ENCODE measurements at regions of chr2 and their contacts with region 1.

Region 1: GRCh38 chr2:180125245-180125962 is 118.3 kb upstream of the CWC22 start:
- DNase-seq: peak; percentile 94
- H3K4me3 ChIP-seq: no peak overlapping the region
- H3K27ac ChIP-seq: no peak overlapping the region
- H3K4me1 ChIP-seq: peaks cover 29% of the 10 kb centered on the region
- H3K27me3 ChIP-seq: no peaks in the 10 kb centered on the region
- CTCF ChIP-seq: peak; percentile 70 to 77

Region 2: DNA sequence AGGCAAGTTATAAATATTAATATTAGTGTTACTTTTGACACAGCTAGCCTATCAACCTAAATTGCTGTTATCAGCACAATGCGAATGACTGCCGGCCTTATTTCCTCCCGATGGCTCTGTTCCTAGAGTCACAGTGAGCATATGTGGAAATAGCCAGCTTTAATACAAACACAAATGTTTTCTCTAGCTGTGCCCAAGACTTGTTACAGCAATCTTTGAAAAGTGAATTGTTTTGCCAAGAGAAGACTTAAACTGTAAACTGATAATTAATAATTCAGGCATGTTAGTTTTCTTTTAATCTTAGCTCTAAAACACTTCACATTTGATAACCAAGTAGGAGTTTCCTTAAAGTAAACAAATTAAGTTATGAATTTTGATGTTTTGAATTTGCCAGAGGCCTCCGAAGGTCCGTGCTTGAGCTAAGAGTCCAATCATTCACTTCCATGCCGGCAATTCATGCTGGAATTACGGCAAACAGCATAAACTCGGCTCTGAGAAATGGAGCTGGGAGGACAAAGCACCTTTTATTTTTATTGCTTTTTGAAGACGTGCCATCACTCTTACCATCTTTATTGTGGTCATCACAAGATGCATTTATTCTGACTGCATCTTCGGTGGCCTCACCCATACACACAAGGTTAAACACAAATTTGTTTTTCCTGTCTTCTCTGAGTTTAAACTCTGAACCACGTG is 66.2 kb after region 1 on chr2:
- CTCF ChIA-PET with region 1: no interaction called
- dilution Hi-C with region 1: no loop called
- in situ Hi-C with region 1: no loop called
- intact Hi-C with region 1: no loop called
- DNase-seq: no peak
- H3K4me3 ChIP-seq: no peak overlapping the region
- H3K27ac ChIP-seq: no peak overlapping the region
- H3K4me1 ChIP-seq: no peaks in the 10 kb centered on the region
- H3K27me3 ChIP-seq: no peaks in the 10 kb centered on the region
- CTCF ChIP-seq: no peak

Region 3: GRCh38 chr2:180222644-180223043 is 97.2 kb after region 1 on chr2:
- CTCF ChIA-PET with region 1: no interaction called
- dilution Hi-C with region 1: no loop called
- in situ Hi-C with region 1: no loop called
- intact Hi-C with region 1: loop called (anchors 5 kb)
- DNase-seq: peak; percentile 95
- H3K4me3 ChIP-seq: peak overlapping the region in 1 of 3 experiments; percentile 2
- H3K27ac ChIP-seq: no peak overlapping the region
- H3K4me1 ChIP-seq: peaks cover 16% of the 10 kb centered on the region
- H3K27me3 ChIP-seq: no peaks in the 10 kb centered on the region
- CTCF ChIP-seq: no peak

Region 4: DNA sequence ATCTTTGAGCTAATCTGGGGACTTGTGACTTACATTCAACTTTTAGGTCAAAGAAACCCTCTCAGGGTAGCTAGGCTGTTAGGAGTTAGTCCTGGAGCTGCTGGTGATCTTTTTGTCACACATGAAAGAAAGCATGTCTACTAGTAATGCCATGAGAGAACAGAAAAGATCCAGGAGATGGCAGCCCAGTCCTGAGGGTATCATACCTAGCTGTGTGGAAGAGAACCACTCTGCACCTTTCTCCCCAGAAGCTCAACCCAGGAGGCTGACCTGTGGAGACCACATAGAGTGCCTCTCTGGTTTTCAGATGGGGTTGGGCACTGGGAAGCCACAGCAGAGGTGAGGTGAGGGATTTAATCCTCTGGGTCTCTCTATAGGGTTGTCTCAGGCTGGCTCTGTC is 394.8 kb after region 1 on chr2:
- CTCF ChIA-PET with region 1: no interaction called
- dilution Hi-C with region 1: no loop called
- in situ Hi-C with region 1: no loop called
- intact Hi-C with region 1: loop called (anchors 10 kb)
- DNase-seq: peak; percentile 36
- H3K4me3 ChIP-seq: no peak overlapping the region
- H3K27ac ChIP-seq: no peak overlapping the region
- H3K4me1 ChIP-seq: peaks cover 38% of the 10 kb centered on the region
- H3K27me3 ChIP-seq: no peaks in the 10 kb centered on the region
- CTCF ChIP-seq: peak in 1 of 2 donors; percentile 46

Region 5: DNA sequence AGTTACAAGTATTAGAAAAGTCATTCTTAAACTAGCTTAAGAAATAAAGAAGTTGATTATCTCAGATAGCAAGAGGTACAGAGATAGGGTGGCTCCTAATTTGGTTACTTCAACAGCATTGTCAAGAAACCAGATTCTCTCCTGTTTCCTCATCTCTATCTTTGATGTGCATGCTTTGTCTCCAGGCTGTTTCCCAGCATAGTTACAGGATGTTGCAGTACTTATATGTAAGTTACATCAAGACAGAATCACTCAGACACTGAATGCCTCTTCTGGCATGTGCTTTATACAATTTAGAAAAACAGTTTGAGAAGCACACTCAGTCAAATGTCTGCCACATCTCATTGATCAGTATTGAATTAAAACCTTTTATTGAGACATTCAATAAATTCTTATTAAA is 665.5 kb after region 1 on chr2:
- CTCF ChIA-PET with region 1: no interaction called
- dilution Hi-C with region 1: no loop called
- in situ Hi-C with region 1: no loop called
- intact Hi-C with region 1: loop called (anchors 5 kb)
- DNase-seq: no peak
- H3K4me3 ChIP-seq: no peak overlapping the region
- H3K27ac ChIP-seq: no peak overlapping the region
- H3K4me1 ChIP-seq: no peaks in the 10 kb centered on the region
- H3K27me3 ChIP-seq: no peaks in the 10 kb centered on the region
- CTCF ChIP-seq: no peak

Region 6: DNA sequence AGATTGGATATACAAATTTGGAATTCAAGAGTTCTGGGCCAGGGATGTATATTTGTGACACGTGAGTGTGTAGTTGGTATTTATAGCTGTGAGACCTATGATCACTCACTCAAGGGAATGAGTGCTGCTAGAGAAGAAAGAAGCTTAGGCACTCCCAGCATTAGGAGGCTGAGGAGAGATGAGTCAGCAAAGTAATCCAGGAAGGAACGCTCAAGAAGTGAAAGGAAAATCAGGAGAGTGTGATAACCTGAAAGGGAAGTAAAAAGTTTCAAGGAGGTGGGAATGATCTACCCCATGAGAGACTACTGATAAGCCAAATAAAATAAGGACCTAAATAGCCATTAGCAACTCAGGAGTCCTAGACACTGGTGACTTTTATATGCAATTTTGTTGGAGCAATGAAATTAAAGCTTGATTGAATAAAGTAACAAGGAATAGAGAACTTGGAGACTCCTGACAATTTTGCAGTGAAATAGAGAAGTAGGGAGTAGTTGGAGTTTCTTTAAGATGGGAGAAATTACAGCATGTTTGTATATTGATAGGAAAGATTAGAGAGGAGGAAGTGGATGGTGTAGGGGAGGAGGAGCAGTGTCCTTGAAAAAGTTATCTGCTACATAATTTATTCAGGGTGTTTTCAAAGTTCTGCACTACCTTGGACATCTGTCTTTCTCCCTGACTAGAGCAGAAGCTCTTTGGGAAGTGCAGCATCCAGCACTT is 944.9 kb after region 1 on chr2:
- CTCF ChIA-PET with region 1: no interaction called
- dilution Hi-C with region 1: no loop called
- in situ Hi-C with region 1: no loop called
- intact Hi-C with region 1: loop called (anchors 5 kb)
- DNase-seq: peak; percentile 64
- H3K4me3 ChIP-seq: no peak overlapping the region
- H3K27ac ChIP-seq: peak overlapping the region; percentile 23
- H3K4me1 ChIP-seq: peaks cover 31% of the 10 kb centered on the region
- H3K27me3 ChIP-seq: no peaks in the 10 kb centered on the region
- CTCF ChIP-seq: no peak

Region 7: DNA sequence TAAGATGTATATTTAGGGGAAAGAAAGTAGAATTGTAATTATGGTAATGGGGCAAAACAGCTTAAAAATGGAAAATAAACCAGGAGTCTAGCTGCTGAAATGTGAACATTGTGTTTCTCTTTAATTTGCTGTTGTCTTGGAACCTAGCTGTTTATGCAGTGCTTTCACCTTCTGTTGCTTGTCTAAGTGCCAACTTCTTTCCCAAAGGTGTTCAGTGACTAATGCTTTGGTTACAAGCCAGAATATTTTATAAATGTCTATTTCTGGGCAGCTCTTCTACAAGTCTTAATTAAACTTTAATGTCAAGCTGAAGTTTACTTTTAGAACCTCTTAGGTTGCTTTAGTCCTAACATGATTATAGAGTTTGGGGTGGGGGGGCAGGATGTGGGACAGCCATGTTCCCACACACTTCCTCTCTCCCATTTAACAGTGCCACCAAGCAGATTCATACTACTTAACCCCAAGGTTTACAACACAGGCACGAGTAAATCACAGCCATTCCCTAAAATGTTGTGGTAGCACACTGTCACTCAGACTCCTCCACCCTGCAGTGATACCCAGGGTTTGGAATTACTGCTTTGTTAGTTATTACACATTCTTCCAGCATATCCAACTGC is 1392.4 kb after region 1 on chr2:
- CTCF ChIA-PET with region 1: interaction called, 27 read pairs
- dilution Hi-C with region 1: no loop called
- in situ Hi-C with region 1: no loop called
- intact Hi-C with region 1: no loop called
- DNase-seq: peak; percentile 65
- H3K4me3 ChIP-seq: no peak overlapping the region
- H3K27ac ChIP-seq: peak overlapping the region; percentile 30
- H3K4me1 ChIP-seq: peaks cover 13% of the 10 kb centered on the region
- H3K27me3 ChIP-seq: no peaks in the 10 kb centered on the region
- CTCF ChIP-seq: no peak

Region 8: DNA sequence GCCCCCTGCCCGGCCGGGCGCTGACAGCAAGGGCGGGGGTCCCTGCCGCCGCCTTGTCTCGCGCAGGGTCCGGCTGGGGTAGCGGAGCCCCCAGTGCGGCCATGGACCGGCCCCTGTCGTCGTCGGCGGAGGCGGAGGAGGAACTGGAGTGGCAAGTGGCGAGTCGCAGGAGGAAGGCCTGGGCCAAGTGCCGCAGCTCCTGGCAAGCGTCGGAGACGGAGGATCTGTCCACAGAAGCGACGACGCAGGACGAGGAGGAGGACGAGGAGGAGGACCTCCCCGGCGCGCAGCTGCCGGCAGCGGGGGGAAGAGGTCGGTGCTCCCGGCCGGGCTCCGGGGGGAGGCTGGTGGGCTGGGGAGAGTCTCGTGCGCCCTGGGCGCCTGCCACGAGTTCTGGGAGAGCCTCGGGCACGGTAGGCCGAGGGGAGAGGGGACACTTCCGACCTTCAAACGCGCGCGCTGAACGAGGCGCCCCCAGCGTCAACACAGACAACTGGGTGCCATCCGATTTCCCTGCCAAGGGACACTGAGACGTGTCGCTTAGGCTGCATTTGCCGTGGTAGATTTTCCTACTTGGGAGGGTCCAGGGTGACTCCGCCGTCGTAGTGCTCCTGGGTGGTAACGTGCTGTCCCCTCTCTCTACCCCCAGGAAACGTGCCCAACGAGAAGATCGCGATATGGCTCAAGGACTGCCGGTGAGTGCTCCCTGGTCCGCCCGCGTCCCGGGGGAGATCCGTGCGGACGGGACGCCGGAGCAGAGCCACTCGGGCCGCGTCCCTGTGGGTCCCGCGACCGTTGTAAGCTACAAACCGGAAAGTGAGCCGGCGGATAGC is 1766.8 kb after region 1 on chr2:
- CTCF ChIA-PET with region 1: no interaction called
- dilution Hi-C with region 1: no loop called
- in situ Hi-C with region 1: no loop called
- intact Hi-C with region 1: loop called (anchors 10 kb)
- DNase-seq: peak; percentile 82
- H3K4me3 ChIP-seq: peak overlapping the region; percentile 83 to 95 (median 87)
- H3K27ac ChIP-seq: peak overlapping the region; percentile 85
- H3K4me1 ChIP-seq: peaks cover 16% of the 10 kb centered on the region
- H3K27me3 ChIP-seq: no peaks in the 10 kb centered on the region
- CTCF ChIP-seq: peak in 1 of 2 donors; percentile 30